ENCODE measurements at regions of chr14 and their contacts with region 1.

Region 1: GRCh38 chr14:22986508-22987054 is 4.2 kb upstream of the AJUBA start:
- DNase-seq: peak; percentile 88
- ATAC-seq: peak; percentile 63
- H3K4me3 ChIP-seq: no peak overlapping the region
- H3K4me3 Mint-ChIP-seq: no peak overlapping the region
- H3K27ac ChIP-seq: no peak overlapping the region
- H3K27ac Mint-ChIP-seq: no peak overlapping the region
- H3K4me1 ChIP-seq: peaks cover 13 to 18% of the 10 kb centered on the region in 2 donors
- H3K4me1 Mint-ChIP-seq: no peaks in the 10 kb centered on the region
- H3K27me3 ChIP-seq: peaks cover 0 to 11% (median 4%) of the 10 kb centered on the region in 4 experiments
- H3K27me3 Mint-ChIP-seq: no peaks in the 10 kb centered on the region
- CTCF ChIP-seq: peak; percentile 89

Region 2: DNA sequence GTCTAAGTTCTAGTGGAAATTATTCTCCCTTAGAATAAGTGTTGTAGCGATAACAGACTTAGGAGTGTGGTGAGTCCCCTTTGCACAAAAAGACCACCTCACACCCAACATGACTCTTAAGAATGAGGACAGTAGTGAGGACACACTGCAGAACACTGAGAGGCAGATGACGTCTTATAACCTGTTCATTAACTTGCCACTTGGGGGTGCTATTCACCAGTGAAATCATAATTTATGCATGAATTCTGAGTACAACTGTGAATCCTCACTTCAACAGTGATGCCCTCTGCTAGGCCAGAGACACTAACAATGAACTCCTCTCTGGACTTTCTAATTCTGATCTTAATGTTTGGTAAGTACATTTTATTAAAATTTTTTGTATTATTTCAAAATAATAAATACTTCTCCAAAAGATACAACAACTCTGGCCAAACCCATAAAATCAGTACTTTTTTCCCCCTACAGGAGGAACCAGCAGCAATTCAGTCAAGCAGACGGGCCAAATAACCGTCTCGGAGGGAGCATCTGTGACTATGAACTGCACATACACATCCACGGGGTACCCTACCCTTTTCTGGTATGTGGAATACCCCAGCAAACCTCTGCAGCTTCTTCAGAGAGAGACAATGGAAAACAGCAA is 672.3 kb before region 1 on chr14:
- CTCF ChIA-PET with region 1: interaction called, 3 read pairs
- POLR2A ChIA-PET with region 1: no interaction called
- intact Hi-C with region 1: loop called (anchors 10 kb)
- DNase-seq: peak; percentile 78
- ATAC-seq: peak; percentile 93
- H3K4me3 ChIP-seq: no peak overlapping the region
- H3K4me3 Mint-ChIP-seq: no peak overlapping the region
- H3K27ac ChIP-seq: no peak overlapping the region
- H3K27ac Mint-ChIP-seq: no peak overlapping the region
- H3K4me1 ChIP-seq: no peaks in the 10 kb centered on the region
- H3K4me1 Mint-ChIP-seq: peaks cover 5% of the 10 kb centered on the region
- H3K27me3 ChIP-seq: no peaks in the 10 kb centered on the region
- H3K27me3 Mint-ChIP-seq: no peaks in the 10 kb centered on the region
- CTCF ChIP-seq: peak; percentile 88

Region 3: GRCh38 chr14:22929104-22929847 is 57.3 kb before region 1 on chr14 and contains the start of gene PRMT5:
- CTCF ChIA-PET with region 1: interaction called, 64 read pairs
- POLR2A ChIA-PET with region 1: interaction called, 3 read pairs
- intact Hi-C with region 1: loop called (anchors 1 kb)
- DNase-seq: peak; percentile 100
- ATAC-seq: peak; percentile 94
- H3K4me3 ChIP-seq: peak within 1 kb of the TSS; percentile 64 to 100 (median 96)
- H3K4me3 Mint-ChIP-seq: no peak within 1 kb of the TSS
- H3K27ac ChIP-seq: peak within 1 kb of the TSS; percentile 65 to 86
- H3K27ac Mint-ChIP-seq: no peak within 1 kb of the TSS
- H3K4me1 ChIP-seq: peaks cover 13 to 23% of the 10 kb centered on the region in 2 donors
- H3K4me1 Mint-ChIP-seq: peaks cover 26% of the 10 kb centered on the region
- H3K27me3 ChIP-seq: no peaks in the 10 kb centered on the region
- H3K27me3 Mint-ChIP-seq: no peaks in the 10 kb centered on the region
- CTCF ChIP-seq: no peak
- total RNA-seq, gene PRMT5: 38.8 and 48.6 TPM in 2 replicates

Region 4: DNA sequence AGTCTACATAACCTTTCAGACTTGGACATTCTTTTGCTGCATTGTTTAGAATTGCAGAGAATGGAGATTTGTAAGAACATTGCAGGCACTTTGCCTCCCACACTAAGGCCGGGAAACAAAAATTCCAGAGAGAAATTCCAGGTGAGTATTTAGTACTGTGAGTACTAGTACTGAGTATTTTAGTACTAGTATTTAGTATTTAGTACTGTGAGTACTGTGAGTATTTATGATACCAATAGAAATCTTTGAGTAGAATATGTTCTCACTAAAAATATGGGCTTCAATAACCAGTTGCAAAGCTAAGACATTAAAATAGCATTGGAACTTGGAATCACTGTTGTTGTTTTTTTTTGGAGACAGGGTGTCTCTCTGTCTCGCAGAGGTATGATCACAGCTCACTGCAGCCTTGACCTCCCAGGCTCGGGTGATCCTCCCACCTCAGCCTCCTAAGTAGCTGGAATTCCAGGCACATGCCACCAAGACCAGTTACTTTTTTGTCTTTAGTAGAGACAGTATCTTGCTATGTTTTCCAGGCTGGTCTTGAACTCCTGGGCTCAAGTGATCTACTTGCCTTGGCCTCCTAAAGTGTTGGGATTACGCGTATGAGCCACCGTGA is 24.4 kb before region 1 on chr14:
- CTCF ChIA-PET with region 1: interaction called, 264 read pairs
- POLR2A ChIA-PET with region 1: interaction called, 3 read pairs
- intact Hi-C with region 1: loop called (anchors 2 kb)
- DNase-seq: no peak
- ATAC-seq: no peak
- H3K4me3 ChIP-seq: no peak overlapping the region
- H3K4me3 Mint-ChIP-seq: no peak overlapping the region
- H3K27ac ChIP-seq: no peak overlapping the region
- H3K27ac Mint-ChIP-seq: no peak overlapping the region
- H3K4me1 ChIP-seq: peaks cover 3 to 5% of the 10 kb centered on the region in 2 donors
- H3K4me1 Mint-ChIP-seq: peaks cover 4% of the 10 kb centered on the region
- H3K27me3 ChIP-seq: no peaks in the 10 kb centered on the region
- H3K27me3 Mint-ChIP-seq: no peaks in the 10 kb centered on the region
- CTCF ChIP-seq: no peak

Region 5: DNA sequence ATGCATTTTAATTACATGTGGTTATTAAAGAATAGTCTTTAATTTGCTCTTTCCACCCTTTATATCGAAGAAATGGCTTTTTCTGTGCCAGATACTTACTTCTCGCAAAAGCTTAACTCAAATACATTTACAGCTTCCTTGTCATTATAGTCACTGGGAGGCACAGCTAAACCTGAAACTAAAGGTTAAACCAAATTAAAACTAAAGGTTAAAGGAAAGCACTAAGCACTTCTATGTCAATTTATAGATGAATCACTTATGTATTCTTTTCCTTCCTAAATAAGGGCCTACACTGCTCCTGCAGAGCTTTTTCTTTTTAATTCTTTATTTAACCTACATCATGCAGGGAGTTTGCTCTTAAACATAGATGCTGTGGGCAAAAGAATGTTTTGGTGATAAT is 14.3 kb after region 1 on chr14:
- CTCF ChIA-PET with region 1: interaction called, 97 read pairs
- POLR2A ChIA-PET with region 1: no interaction called
- intact Hi-C with region 1: loop called (anchors 2 kb)
- DNase-seq: no peak
- ATAC-seq: no peak
- H3K4me3 ChIP-seq: no peak overlapping the region
- H3K4me3 Mint-ChIP-seq: no peak overlapping the region
- H3K27ac ChIP-seq: no peak overlapping the region
- H3K27ac Mint-ChIP-seq: no peak overlapping the region
- H3K4me1 ChIP-seq: peaks cover under 1 to 1% of the 10 kb centered on the region in 2 donors
- H3K4me1 Mint-ChIP-seq: peaks cover 2% of the 10 kb centered on the region
- H3K27me3 ChIP-seq: no peaks in the 10 kb centered on the region
- H3K27me3 Mint-ChIP-seq: no peaks in the 10 kb centered on the region
- CTCF ChIP-seq: no peak

Region 6: DNA sequence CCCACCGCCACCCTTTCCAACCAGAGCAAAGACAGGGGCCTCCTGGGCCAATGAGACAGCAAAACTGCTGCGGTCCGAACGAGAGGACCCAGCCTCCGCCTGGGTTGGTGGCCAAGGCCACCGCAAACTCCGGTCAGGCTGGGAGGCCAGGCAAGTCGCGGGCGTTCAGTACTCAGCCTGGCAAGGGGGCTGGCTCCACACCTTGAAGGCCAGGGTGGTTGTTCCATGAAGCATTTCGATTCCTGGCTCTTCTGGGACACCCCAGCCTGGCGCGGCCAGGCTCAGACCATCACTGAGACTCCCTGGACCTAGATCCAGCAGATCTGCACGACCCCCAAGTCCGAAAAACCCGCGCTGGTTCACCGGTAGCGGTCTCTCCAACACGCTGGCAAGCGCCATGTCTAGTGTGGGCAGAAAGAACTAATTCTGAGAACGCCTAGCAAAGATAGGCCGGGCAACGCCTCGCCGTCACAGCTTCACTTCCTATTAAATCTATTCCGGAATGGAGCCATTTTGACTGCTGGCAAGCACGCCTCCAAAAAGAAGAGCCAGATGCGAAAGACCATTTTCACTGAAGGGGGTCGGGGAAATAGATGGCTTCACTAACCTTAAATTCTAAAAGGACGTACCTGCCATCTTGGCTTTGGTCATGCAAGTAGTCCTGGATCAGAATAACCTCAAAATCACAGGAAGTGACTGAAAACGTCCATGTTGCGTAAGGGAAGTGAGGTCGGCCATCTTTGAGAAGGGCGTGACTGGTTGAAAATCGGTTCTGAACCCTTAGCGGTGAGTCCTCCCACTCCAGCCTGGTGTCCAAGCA is 48.1 kb after region 1 on chr14 and contains the start of gene PSMB5:
- CTCF ChIA-PET with region 1: interaction called, 12 read pairs
- POLR2A ChIA-PET with region 1: no interaction called
- intact Hi-C with region 1: no loop called
- DNase-seq: peak; percentile 96
- ATAC-seq: peak; percentile 92
- H3K4me3 ChIP-seq: peak within 1 kb of the TSS; percentile 62 to 100 (median 66)
- H3K4me3 Mint-ChIP-seq: peak within 1 kb of the TSS; percentile 86
- H3K27ac ChIP-seq: peak within 1 kb of the TSS; percentile 81 to 93
- H3K27ac Mint-ChIP-seq: peak within 1 kb of the TSS; percentile 93
- H3K4me1 ChIP-seq: peaks cover 14 to 20% of the 10 kb centered on the region in 2 donors
- H3K4me1 Mint-ChIP-seq: peaks cover 28% of the 10 kb centered on the region
- H3K27me3 ChIP-seq: no peaks in the 10 kb centered on the region
- H3K27me3 Mint-ChIP-seq: no peaks in the 10 kb centered on the region
- CTCF ChIP-seq: no peak
- total RNA-seq, gene PSMB5: 29.0 and 31.9 TPM in 2 replicates

Region 7: GRCh38 chr14:23068476-23069412 is 82.2 kb after region 1 on chr14:
- CTCF ChIA-PET with region 1: interaction called, 1,134 read pairs
- POLR2A ChIA-PET with region 1: no interaction called
- intact Hi-C with region 1: no loop called
- DNase-seq: peak; percentile 87
- ATAC-seq: peak; percentile 85
- H3K4me3 ChIP-seq: no peak overlapping the region
- H3K4me3 Mint-ChIP-seq: no peak overlapping the region
- H3K27ac ChIP-seq: peak overlapping the region; percentile 10 to 28
- H3K27ac Mint-ChIP-seq: peak overlapping the region; percentile 83
- H3K4me1 ChIP-seq: peaks cover 21 to 41% of the 10 kb centered on the region in 2 donors
- H3K4me1 Mint-ChIP-seq: peaks cover 38% of the 10 kb centered on the region
- H3K27me3 ChIP-seq: no peaks in the 10 kb centered on the region
- H3K27me3 Mint-ChIP-seq: no peaks in the 10 kb centered on the region
- CTCF ChIP-seq: peak; percentile 99

Region 8: DNA sequence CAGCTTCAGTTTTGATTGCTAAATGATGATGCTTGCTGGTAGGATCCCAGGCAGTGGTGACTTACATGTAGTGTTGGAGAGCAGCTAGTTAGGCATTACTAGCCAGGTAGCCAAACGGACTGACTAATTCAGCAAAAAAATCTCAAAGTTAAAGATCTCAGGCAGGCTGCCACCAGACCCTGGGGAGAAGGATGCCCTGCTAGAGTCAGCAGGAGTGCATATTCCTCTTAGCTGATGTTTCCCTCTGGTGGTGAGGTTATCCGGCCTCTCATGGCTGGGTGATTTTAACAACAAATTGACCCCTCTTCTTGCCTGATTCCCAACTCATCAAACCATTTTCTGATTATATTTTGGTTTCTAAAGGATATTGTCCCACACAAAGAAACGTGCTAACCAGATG is 375.6 kb after region 1 on chr14:
- CTCF ChIA-PET with region 1: no interaction called
- POLR2A ChIA-PET with region 1: no interaction called
- intact Hi-C with region 1: no loop called
- DNase-seq: no peak
- ATAC-seq: no peak
- H3K4me3 ChIP-seq: no peak overlapping the region
- H3K4me3 Mint-ChIP-seq: no peak overlapping the region
- H3K27ac ChIP-seq: no peak overlapping the region
- H3K27ac Mint-ChIP-seq: no peak overlapping the region
- H3K4me1 ChIP-seq: no peaks in the 10 kb centered on the region
- H3K4me1 Mint-ChIP-seq: no peaks in the 10 kb centered on the region
- H3K27me3 ChIP-seq: peaks cover 0 to 29% (median 3%) of the 10 kb centered on the region in 4 experiments
- H3K27me3 Mint-ChIP-seq: peaks cover 31% of the 10 kb centered on the region
- CTCF ChIP-seq: no peak

Measured in B cell (primary cell).